ENCODE measurements at regions of chr1 and their contacts with region 1.

Region 1: GRCh38 chr1:9292361-9293240 is at the start of gene SPSB1:
- DNase-seq: peak; percentile 76 to 82 (median 79)
- ATAC-seq: peak; percentile 15 to 61 (median 53)
- H3K4me3 ChIP-seq: peak within 1 kb of the TSS; percentile 60 to 100 (median 91)
- H3K27ac ChIP-seq: peak within 1 kb of the TSS; percentile 73 to 93 (median 84)
- H3K4me1 ChIP-seq: peaks cover 0 to 52% (median 31%) of the 10 kb centered on the region in 12 donors
- H3K27me3 ChIP-seq: no peaks in the 10 kb centered on the region
- CTCF ChIP-seq: peak in 1 of 12 donors; percentile 9
- POLR2A ChIP-seq: peak; percentile 60 to 89
- total RNA-seq, gene SPSB1: 7.7 to 27.2 (median 9.2) TPM

Region 2: DNA sequence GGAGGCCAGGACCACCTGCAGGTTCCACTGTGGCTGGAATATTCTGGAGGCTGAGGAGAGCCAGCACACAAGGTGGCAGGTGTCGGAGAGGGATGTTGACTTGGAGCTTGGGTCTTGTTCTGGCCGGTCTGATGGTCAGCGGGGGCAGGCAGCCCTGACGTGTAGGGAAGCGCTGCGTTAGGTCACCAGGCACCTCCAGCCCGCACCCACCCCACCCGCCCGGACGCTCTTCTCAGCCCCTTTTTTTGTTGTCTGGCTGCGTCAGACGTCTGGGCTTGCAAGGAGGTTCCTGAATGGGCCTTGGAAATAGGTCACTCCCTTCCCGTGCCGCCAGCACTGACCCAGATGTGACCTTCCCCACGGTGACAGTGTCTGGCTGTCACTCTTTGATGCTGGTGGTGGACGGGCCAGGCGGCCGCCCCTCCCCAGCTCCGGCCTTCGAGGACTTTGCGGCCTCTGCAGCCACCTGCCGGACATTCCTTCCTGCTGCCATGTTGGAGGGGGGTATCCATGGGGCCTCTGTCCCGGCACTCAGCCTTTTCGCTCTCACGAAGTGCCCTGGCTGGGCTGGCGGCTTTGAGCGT is 30.2 kb after region 1 on chr1:
- intact Hi-C with region 1: loop called in 1 of 10 experiments (anchors 1 kb)
- DNase-seq: peak; percentile 55 to 79 (median 61)
- ATAC-seq: peak; percentile 48 to 82 (median 72)
- H3K4me3 ChIP-seq: no peak overlapping the region
- H3K27ac ChIP-seq: no peak overlapping the region
- H3K4me1 ChIP-seq: peaks cover 0 to 79% (median 37%) of the 10 kb centered on the region in 12 donors
- H3K27me3 ChIP-seq: no peaks in the 10 kb centered on the region
- CTCF ChIP-seq: peak in 8 of 12 donors; percentile 22 to 48 (median 31)
- POLR2A ChIP-seq: no peak

Region 3: DNA sequence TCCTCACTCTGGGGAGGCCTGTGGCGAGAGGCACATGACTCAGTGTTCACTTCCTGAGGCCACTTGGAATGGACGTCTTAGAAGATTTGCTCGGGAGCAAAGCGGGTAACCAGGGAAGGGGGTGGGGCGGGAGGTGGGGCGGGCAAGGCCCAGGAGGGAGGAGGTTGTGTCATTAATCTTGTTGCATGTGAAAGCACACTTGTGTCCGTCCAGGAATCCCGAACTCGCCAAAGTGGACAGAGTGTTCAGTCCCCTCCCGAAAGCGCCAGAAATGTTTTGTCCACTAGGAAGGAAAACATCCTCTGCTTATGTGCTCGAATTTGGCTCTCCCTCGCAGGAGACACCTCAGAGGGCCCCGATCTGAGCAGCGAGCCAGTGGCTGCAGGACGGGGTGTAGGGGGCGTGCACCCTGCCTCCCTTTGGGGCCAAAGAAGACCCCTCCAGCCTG is 84.3 kb after region 1 on chr1:
- intact Hi-C with region 1: loop called in 4 of 10 experiments (anchors 5 kb)
- DNase-seq: peak in 2 of 5 donors; percentile 57 to 77
- ATAC-seq: peak; percentile 51 to 79 (median 74)
- H3K4me3 ChIP-seq: no peak overlapping the region
- H3K27ac ChIP-seq: peak overlapping the region in 11 of 12 donors; percentile 47 to 84 (median 66)
- H3K4me1 ChIP-seq: peaks cover 0 to 44% (median 19%) of the 10 kb centered on the region in 12 donors
- H3K27me3 ChIP-seq: no peaks in the 10 kb centered on the region
- CTCF ChIP-seq: no peak
- POLR2A ChIP-seq: no peak

Region 4: GRCh38 chr1:9441451-9442133 is 149.0 kb after region 1 on chr1:
- intact Hi-C with region 1: loop called in 2 of 10 experiments (anchors 5 kb)
- DNase-seq: peak; percentile 52 to 74 (median 68)
- ATAC-seq: peak; percentile 31 to 71 (median 59)
- H3K4me3 ChIP-seq: peak overlapping the region in 1 of 12 donors; percentile 9
- H3K27ac ChIP-seq: peak overlapping the region; percentile 66 to 88 (median 77)
- H3K4me1 ChIP-seq: peaks cover 0 to 55% (median 31%) of the 10 kb centered on the region in 12 donors
- H3K27me3 ChIP-seq: no peaks in the 10 kb centered on the region
- CTCF ChIP-seq: no peak
- POLR2A ChIP-seq: no peak

Region 5: DNA sequence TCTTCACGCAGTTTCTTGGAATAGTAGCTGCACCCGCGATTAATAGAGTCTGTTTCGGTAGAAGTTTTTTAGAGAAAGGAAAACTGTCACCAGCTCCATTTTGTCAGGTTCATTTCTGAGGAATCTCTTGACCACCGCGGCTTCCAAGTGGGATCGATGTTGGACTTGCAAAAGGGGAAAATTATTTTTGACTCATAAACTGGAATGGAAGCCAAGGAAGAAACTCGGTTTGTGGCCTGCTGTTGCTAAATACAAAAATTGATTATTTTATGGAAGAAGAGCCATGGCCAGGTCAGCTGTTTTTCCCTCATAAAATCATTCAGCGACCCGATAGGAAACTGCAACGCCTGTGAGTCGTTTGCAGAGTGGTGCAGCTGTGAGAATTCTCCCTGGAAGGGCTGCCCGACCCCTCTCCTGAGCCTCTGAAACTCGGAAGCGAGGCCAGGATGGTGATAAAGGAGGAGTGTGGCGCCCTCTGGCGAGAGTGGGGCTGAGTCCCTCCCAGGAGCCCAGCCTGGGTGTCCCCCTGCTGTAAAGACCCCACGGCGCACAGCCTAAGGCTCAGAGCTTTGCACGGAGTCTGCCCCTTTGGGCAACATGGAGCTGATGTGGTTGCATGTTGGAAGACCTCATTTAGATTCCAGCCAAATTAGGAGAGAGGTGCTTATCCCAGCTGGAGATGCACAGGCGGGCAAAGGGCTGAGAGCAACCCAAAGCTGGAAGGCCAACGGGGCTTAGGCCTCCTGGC is 163.1 kb after region 1 on chr1:
- intact Hi-C with region 1: loop called in 9 of 10 experiments (anchors 2 to 10 kb)
- DNase-seq: peak; percentile 59 to 83 (median 60)
- ATAC-seq: peak; percentile 69 to 85 (median 82)
- H3K4me3 ChIP-seq: peak overlapping the region in 1 of 12 donors; percentile 15
- H3K27ac ChIP-seq: no peak overlapping the region
- H3K4me1 ChIP-seq: peaks cover 0 to 9% (median 0%) of the 10 kb centered on the region in 12 donors
- H3K27me3 ChIP-seq: no peaks in the 10 kb centered on the region
- CTCF ChIP-seq: peak; percentile 63 to 83 (median 76)
- POLR2A ChIP-seq: no peak

Region 6: DNA sequence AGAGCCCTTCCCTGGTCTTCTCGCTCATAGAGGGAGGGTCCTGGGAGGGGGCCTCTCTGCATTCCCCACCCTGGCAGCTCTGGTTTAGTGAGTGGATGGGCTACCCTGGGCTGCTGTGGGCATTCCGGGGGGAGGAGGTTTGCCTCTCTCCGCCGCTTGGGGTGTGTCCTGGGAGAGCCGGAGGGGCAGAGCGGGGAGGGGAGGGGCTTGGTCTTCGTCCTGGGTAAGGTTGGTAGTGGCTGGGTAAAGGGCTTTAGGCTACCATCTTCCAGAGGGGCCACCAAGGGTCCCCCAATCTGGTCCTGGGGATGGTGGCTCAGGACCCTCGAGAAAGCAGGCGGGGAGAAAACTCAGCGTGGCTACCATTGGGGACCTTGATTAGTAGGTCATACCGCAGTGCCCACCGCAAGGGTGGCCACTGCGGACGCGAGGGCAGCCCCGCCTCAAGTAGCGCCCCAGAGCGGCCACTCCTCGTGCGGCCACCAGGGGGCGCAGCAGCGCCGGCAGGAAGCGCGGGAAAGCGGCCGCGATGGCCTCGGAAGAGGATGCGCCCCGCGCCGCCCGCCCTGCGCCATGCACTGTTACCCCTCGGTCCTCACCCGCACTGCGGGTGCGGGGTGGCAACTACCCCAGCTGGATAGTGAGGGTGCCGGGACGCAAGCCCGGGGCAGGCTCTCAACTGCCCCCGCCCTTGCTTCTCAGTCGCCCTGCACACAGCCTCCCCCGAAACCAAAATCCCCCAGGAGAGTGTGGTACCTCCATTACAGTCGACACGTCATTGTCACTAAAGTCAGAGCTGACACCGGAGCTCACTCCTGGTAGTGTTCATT is 202.5 kb after region 1 on chr1:
- intact Hi-C with region 1: loop called in 9 of 10 experiments (anchors 1 to 5 kb)
- DNase-seq: peak; percentile 33 to 77 (median 49)
- ATAC-seq: peak in 3 of 4 donors; percentile 54 to 80 (median 65)
- H3K4me3 ChIP-seq: peak overlapping the region in 9 of 12 donors; percentile 26 to 53 (median 39)
- H3K27ac ChIP-seq: no peak overlapping the region
- H3K4me1 ChIP-seq: peaks cover 0 to 10% (median 4%) of the 10 kb centered on the region in 12 donors
- H3K27me3 ChIP-seq: peaks cover 0 to 8% (median 0%) of the 10 kb centered on the region in 9 donors
- CTCF ChIP-seq: peak; percentile 88 to 100 (median 98)
- POLR2A ChIP-seq: no peak